AG04449 (cell line): ENCODE measurements at regions of chr3 and their contacts with region 1.

Region 1: DNA sequence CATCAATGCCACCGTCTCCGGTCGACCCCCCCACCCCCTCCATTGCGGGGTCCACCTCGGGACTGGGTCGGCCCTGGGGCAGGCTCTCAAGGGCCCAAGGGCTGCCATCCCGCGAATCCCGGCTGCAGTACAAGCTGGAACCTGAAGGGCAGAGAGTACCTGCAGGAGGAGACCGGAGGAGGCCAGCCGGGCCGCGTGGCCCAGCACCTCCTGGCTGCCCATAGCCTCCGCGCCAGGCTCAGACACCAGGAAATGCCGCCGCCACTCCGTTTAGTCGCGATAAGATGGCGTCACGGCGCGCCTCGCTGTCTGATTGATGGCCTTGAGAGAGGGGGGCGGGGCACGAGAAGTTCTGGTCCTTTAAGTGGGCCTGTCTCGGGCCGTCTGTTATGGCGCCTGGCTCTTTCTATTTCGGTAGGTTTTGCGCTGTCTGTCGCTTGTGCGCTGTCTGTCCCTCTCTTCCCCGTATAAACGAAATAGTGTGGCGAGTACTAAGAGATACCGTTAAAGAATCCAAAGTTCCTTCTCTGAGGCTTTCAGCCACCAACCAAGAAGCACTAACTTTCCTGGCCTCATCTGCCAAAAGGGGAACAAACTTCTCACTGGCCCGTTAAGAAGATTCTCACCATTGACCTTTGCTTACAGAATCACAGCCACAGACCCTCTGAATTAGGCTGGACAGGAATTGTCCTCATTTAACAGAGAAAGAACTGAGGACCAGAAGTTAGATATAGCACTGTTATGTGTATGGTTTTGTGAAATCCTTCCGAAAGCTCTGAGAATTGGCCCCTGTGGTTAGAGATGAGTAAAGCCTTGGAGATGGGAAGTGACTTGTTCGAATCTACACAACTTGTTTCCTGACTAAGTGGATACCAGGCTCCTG is at the start of gene RFT1:
- DNase-seq: peak; percentile 78
- H3K4me3 ChIP-seq: peak within 1 kb of the TSS; percentile 97
- CTCF ChIP-seq: peak; percentile 13

Region 2: GRCh38 chr3:53114011-53114400 is 16.4 kb before region 1 on chr3:
- CTCF ChIA-PET with region 1: interaction called, 58 read pairs
- POLR2A ChIA-PET with region 1: interaction called, 3 read pairs
- DNase-seq: no peak
- H3K4me3 ChIP-seq: no peak overlapping the region
- CTCF ChIP-seq: peak; percentile 92

Region 3: GRCh38 chr3:53160660-53161449 is 30.4 kb after region 1 on chr3 and contains the start of gene PRKCD:
- CTCF ChIA-PET with region 1: interaction called, 14 read pairs
- POLR2A ChIA-PET with region 1: no interaction called
- DNase-seq: peak; percentile 16
- H3K4me3 ChIP-seq: peak within 1 kb of the TSS; percentile 78
- CTCF ChIP-seq: peak; percentile 62

Region 4: GRCh38 chr3:53180305-53181023 is 50.0 kb after region 1 on chr3:
- CTCF ChIA-PET with region 1: interaction called, 11 read pairs
- POLR2A ChIA-PET with region 1: no interaction called
- DNase-seq: no peak
- H3K4me3 ChIP-seq: no peak overlapping the region
- CTCF ChIP-seq: no peak

Region 5: DNA sequence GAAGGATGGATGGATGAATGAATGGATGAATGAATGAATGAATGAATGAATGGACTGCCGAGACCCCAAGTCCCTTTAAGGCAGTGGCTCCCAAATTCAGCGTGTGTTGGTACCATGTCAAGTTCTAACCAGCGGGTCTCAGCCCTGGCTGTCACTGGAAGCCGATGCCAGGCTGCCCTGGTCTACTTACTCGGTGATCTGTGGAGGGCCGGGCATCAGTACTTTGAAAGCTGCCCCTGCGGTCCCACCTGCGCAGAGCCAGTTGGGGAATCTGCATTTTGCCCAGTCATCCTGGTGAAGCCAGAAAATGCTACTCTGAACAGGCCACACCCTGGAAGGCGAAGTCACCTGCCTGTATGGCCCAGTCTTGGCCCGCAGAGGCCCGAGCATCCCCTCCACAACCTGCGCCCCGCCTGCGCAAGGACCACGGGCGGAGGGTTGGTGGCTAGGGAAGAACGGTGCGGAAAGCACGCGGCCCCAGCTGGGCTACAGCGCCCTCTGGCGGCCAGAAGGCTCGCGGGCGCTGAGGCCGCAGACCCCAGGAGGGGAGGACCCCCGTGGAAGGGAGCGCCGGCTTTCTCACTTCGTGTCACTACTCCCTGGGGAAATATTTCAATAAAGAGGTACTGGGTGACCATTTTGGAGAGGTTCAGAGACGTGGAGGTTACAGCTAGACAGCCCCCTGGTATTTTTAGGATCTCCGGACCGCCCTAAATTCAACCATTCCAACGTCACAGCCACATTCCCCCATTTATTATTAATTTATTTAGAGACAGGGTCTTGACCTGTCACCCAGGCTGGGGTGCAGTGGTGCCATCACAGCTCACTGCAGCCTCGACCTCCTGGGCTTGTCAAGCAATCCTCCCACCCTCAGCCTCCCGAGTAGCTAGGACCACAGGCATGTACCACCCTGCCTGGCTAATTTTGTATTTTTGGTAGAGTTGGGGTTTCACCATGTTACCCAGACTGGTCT is 65.5 kb after region 1 on chr3:
- CTCF ChIA-PET with region 1: interaction called, 245 read pairs
- POLR2A ChIA-PET with region 1: no interaction called
- DNase-seq: no peak
- H3K4me3 ChIP-seq: no peak overlapping the region
- CTCF ChIP-seq: peak; percentile 99